Activated T-helper 1 cell treated with anti-CD3 and anti-CD28 coated beads, Interleukin-12 subunit alpha, Interleukin-12 subunit beta, Interleukin-2, Interleukin-4 antibody, amounts not matched to agents 30 ng/mL and 10 ng/mL and 1 ng/mL, durations not matched to agents 14 hours and 24 hours and 36 hours (primary cell): ENCODE measurements at regions of chr4 and their contacts with region 1.

Region 1: GRCh38 chr4:54233277-54233696 is 4.2 kb downstream of the PDGFRA start:
- DNase-seq: peak; percentile 64
- H3K4me3 Mint-ChIP-seq: peak overlapping the region; percentile 57
- H3K27ac Mint-ChIP-seq: no peak overlapping the region
- H3K4me1 Mint-ChIP-seq: peaks cover 12% of the 10 kb centered on the region
- H3K27me3 Mint-ChIP-seq: peaks cover 53% of the 10 kb centered on the region

Region 2: DNA sequence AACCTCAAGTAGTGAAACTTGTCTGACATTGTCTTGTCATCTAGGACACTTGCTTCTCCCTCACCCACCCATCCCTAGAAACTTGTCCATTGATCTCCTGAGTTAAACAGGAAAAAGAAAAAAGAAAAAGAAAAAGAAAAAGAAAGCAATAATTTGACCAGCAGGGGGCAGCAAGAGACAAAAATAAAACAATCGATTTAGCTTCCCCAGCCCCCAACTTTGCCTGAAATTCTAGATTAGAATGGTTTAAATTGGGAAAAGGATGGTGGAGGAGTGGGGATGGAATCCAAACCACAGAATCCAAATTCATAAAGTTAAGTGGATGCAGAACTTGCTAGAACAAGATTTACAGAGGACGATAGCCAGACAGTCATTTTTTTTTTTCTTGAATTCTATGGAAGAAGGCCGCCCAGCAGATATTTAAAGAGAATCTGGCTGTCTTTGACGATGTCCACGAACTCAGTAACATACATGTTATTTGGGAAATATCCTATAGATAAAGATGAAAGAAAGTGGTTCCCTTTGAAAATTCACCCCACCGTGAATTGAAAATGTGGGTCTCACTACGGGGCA is 1857.1 kb before region 1 on chr4:
- intact Hi-C with region 1: loop called (anchors 1 kb)
- DNase-seq: no peak
- H3K4me3 Mint-ChIP-seq: no peak overlapping the region
- H3K27ac Mint-ChIP-seq: no peak overlapping the region
- H3K4me1 Mint-ChIP-seq: no peaks in the 10 kb centered on the region
- H3K27me3 Mint-ChIP-seq: peaks cover 2% of the 10 kb centered on the region

Region 3: GRCh38 chr4:52712172-52712990 is 1520.9 kb before region 1 on chr4:
- intact Hi-C with region 1: loop called (anchors 5 kb)
- DNase-seq: peak; percentile 97
- H3K4me3 Mint-ChIP-seq: peak overlapping the region; percentile 98
- H3K27ac Mint-ChIP-seq: peak overlapping the region; percentile 96
- H3K4me1 Mint-ChIP-seq: peaks cover 57% of the 10 kb centered on the region
- H3K27me3 Mint-ChIP-seq: no peaks in the 10 kb centered on the region

Region 4: DNA sequence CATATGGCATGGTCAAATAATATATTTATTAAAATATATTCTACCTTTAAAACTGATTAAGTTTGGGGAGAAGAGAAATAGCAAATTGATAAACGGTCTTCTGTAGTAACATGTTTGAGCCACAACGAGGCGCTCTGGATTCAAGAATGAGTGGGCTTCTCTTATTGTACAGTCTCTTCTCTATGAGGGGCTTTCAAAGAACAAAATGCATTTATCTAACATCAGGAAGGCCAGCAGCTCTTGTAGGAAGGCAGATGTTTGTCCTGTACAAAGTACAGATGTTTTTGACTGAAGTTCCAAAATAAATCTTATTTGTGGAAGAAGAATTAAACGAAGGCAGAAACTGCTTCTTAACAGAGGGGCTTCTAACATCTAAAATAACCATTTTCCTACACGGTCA is 1217.6 kb before region 1 on chr4:
- intact Hi-C with region 1: loop called (anchors 5 kb)
- DNase-seq: no peak
- H3K4me3 Mint-ChIP-seq: no peak overlapping the region
- H3K27ac Mint-ChIP-seq: no peak overlapping the region
- H3K4me1 Mint-ChIP-seq: peaks cover 24% of the 10 kb centered on the region
- H3K27me3 Mint-ChIP-seq: no peaks in the 10 kb centered on the region

Region 5: DNA sequence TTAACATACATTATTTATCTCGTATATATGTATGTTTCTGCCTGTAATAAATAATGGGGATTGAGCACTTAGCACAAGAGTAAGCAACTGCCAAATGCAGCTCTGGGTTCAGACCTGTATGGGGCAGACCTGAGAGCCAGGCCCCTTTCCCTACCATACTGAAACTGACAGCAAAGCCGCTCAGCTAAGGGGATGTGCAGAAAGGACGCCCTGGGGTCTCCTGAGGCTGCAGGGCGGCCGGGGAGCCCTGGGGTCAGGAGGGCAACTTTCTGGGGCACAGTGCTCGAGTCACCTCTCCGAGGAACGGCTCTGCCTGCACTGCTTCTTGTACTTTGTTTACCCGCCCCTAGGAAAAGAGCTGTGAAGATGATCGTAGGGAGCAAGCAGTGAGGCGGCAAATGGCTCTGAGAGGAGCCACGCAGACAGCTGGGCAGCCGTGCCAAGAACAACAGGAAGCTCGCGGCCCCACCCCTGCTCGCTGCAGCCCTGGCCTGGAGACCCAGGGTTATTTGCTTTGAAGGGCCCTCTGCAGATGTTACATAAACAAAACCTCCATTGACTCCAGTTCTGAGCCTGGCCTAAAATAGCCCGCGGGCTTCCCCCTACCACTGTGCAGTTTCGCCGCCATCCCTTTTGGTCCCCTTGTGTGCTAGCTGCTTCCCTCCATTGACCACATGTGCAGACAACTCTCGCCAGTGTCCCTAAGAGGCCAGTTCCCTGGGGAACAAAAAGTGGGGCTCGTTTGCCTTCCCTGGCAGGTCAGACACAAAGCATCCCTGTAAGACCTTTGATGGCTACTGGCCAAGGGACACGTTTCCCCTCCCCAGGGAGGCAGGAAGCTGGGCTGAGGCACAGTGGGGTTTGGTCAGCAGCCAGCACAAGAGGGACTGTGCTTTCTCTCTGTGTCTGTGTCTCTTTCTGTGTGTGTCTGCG is 530.7 kb before region 1 on chr4:
- intact Hi-C with region 1: loop called (anchors 10 kb)
- DNase-seq: no peak
- H3K4me3 Mint-ChIP-seq: no peak overlapping the region
- H3K27ac Mint-ChIP-seq: no peak overlapping the region
- H3K4me1 Mint-ChIP-seq: peaks cover 6% of the 10 kb centered on the region
- H3K27me3 Mint-ChIP-seq: peaks cover 5% of the 10 kb centered on the region

Region 6: GRCh38 chr4:53929955-53930798 is 303.1 kb before region 1 on chr4:
- intact Hi-C with region 1: loop called (anchors 1 kb)
- DNase-seq: peak; percentile 14
- H3K4me3 Mint-ChIP-seq: no peak overlapping the region
- H3K27ac Mint-ChIP-seq: no peak overlapping the region
- H3K4me1 Mint-ChIP-seq: no peaks in the 10 kb centered on the region
- H3K27me3 Mint-ChIP-seq: peaks cover 3% of the 10 kb centered on the region

Region 7: DNA sequence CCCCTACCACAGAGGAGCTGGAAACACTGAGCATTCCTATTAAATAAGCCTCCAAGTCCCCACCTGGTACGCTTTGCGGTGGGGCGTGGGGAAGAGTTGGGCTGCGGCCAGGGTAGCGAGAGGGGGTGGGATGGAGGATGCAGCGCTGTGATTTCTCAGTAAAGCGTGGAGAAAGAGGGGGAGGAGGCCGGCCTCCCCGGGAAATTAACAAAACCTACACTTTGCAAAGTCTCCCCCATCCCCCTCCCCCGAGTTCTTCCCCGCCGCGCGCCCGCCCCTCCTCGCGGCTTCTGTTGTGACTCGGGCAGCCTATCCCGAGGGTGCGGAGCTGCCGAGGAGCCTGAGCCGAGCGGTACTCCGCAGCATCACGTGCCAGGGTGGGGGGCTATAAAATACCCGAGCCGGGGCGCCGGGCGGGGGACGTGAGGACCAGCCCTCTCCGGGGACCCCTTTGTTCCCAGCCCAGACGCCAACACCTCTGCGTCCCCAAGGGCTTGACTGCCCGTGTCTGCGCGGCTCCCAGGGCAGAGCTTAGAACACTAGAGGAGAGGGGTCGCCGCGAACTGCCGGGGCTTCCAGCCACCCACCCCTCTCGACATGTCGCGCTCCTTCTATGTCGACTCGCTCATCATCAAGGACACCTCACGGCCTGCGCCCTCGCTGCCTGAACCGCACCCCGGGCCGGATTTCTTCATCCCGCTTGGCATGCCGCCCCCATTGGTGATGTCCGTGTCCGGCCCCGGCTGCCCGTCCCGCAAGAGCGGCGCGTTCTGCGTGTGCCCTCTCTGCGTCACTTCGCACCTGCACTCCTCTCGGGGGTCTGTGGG is 133.3 kb before region 1 on chr4 and contains the start of gene GSX2:
- intact Hi-C with region 1: loop called (anchors 1 kb)
- DNase-seq: no peak
- H3K4me3 Mint-ChIP-seq: peak within 1 kb of the TSS; percentile 62
- H3K27ac Mint-ChIP-seq: no peak within 1 kb of the TSS
- H3K4me1 Mint-ChIP-seq: peaks cover 34% of the 10 kb centered on the region
- H3K27me3 Mint-ChIP-seq: peaks cover 88% of the 10 kb centered on the region
- total RNA-seq, gene GSX2: not detected in 2 replicates

Region 8: GRCh38 chr4:54819034-54819433 is 585.7 kb after region 1 on chr4:
- intact Hi-C with region 1: no loop called
- DNase-seq: no peak
- H3K4me3 Mint-ChIP-seq: no peak overlapping the region
- H3K27ac Mint-ChIP-seq: no peak overlapping the region
- H3K4me1 Mint-ChIP-seq: no peaks in the 10 kb centered on the region
- H3K27me3 Mint-ChIP-seq: no peaks in the 10 kb centered on the region